ENCODE measurements at regions of chr3 and their contacts with region 1.

Region 1: DNA sequence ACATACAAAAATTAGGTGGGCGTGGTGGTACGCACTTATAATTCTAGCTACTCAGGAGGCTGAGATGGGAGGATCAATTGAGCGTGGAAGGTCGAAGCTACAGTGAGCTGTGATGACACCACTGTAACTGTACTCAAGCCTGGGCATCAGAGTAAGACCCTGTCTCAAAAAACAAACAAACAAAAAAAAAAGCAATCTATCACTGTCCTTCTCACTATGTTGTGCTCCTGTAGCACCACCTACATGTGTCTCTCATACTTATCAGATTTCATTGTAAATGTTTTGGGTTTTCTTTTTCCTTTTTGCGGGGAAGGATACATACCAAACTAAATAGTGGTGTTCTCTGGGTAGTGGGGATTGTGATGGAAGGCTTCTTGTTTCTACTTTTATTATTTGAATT is 14.8 kb downstream of the FANCD2 start:
- DNase-seq: no peak
- H3K4me3 ChIP-seq: no peak overlapping the region
- H3K27ac ChIP-seq: no peak overlapping the region
- H3K4me1 ChIP-seq: no peaks in the 10 kb centered on the region
- H3K27me3 ChIP-seq: no peaks in the 10 kb centered on the region
- CTCF ChIP-seq: no peak

Region 2: GRCh38 chr3:11878840-11879239 is 1837.8 kb after region 1 on chr3:
- CTCF ChIA-PET with region 1: no interaction called
- dilution Hi-C with region 1: no loop called
- in situ Hi-C with region 1: loop called in 1 of 2 experiments (anchors 10 kb)
- intact Hi-C with region 1: no loop called
- DNase-seq: no peak
- H3K4me3 ChIP-seq: no peak overlapping the region
- H3K27ac ChIP-seq: no peak overlapping the region
- H3K4me1 ChIP-seq: no peaks in the 10 kb centered on the region
- H3K27me3 ChIP-seq: peaks cover 2% of the 10 kb centered on the region
- CTCF ChIP-seq: no peak

Measured in mammary epithelial cell (primary cell).